Testis (tissue), 5 donors: ENCODE measurements at regions of chr20 and their contacts with region 1.

Region 1: DNA sequence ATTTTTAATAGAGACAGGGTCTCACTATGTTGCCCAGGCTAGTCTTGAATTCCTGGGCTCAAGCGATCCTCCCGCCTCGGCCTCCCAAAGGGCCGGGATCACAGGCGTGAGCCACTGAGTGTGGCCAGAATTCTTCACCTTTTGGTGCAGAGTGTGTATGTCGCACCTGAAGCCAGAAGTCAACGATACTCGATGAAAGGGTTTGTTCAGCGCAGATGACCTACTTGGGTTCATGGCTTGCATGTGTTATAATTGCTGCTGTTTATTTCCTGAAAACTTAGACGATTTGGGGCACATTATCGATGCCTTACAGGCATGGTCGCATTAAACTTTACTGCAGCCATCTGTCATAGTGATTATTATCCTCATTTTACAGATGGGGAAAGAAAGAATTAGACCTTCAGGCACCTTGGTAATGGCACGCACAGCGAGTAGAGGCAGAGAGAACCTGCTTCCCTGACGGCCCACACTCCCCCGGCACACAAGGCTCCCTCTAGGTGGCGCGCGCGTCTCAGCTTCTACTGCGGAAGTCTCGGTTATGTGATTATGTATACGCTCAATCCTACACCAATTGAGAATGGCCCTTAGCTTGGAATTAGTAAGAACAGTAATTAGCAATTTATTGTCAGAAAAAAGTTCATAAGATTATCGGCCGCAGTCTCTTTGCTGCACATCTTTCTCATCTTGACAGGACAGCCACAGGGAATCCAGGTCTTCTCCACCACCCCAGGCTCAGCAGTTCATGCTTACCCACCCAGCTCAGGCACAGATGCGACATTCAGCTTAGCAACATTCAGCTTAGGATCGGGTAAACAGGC is 212.8 kb upstream of the PROKR2 start:
- DNase-seq: peak; percentile 89
- H3K4me3 ChIP-seq: no peak overlapping the region
- H3K27ac ChIP-seq: no peak overlapping the region
- H3K4me1 ChIP-seq: no peaks in the 10 kb centered on the region
- H3K27me3 ChIP-seq: no peaks in the 10 kb centered on the region
- CTCF ChIP-seq: peak in 2 of 3 experiments; percentile 65 to 79
- POLR2A ChIP-seq: no peak

Region 2: DNA sequence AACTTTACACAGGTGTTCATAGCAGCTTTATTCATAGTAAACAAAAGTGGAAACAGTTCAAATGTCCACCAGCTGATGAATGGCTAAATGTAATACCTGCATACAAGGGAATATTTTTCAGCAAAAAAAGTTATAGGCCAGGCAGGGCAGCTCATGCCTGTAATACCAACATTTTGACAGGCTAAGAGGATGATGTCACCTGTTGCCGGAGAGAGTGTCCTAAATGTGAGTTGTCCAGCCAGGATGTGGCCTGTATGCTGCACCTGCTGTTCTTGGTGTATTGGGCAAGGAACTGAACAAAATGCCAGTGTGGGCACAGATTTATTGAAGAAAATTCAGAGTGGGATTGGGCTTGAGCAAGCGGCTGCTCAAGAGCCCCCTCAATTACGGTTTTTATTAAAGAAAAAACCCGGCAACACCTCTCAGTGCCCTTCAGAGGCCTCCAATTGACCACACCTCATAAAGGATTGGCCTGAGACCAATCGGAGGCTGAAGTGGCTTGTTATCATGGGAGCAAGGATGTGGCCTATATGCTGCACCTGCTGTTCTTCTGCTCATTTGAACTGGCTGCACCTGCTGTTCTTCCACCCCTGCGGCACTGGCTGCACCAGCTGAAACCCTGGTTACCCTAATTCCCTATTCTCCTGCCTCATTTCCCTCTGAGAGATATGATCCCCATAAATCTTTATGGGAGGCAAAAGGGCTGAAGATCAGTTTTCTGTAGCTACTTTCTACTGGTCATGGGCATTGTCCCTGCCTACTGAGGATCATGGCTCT is 48.5 kb before region 1 on chr20:
- intact Hi-C with region 1: no loop called
- DNase-seq: no peak
- H3K4me3 ChIP-seq: no peak overlapping the region
- H3K27ac ChIP-seq: no peak overlapping the region
- H3K4me1 ChIP-seq: no peaks in the 10 kb centered on the region
- H3K27me3 ChIP-seq: no peaks in the 10 kb centered on the region
- CTCF ChIP-seq: no peak
- POLR2A ChIP-seq: no peak

Region 3: GRCh38 chr20:5797843-5798462 is 268.4 kb after region 1 on chr20:
- intact Hi-C with region 1: loop called (anchors 10 kb)
- DNase-seq: no peak
- H3K4me3 ChIP-seq: no peak overlapping the region
- H3K27ac ChIP-seq: no peak overlapping the region
- H3K4me1 ChIP-seq: no peaks in the 10 kb centered on the region
- H3K27me3 ChIP-seq: no peaks in the 10 kb centered on the region
- CTCF ChIP-seq: no peak
- POLR2A ChIP-seq: no peak